Activated B cell treated with CpG ODN at 0.5 μM for 24 hours (primary cell): ENCODE measurements at regions of chr2 and their contacts with region 1.

Region 1: GRCh38 chr2:42944779-42945415 is 152.5 kb upstream of the HAAO start:
- DNase-seq: no peak
- ATAC-seq: no peak
- H3K4me3 Mint-ChIP-seq: no peak overlapping the region
- H3K27ac Mint-ChIP-seq: no peak overlapping the region
- H3K4me1 Mint-ChIP-seq: peaks cover 32% of the 10 kb centered on the region
- H3K27me3 Mint-ChIP-seq: no peaks in the 10 kb centered on the region
- CTCF ChIP-seq: no peak

Region 2: DNA sequence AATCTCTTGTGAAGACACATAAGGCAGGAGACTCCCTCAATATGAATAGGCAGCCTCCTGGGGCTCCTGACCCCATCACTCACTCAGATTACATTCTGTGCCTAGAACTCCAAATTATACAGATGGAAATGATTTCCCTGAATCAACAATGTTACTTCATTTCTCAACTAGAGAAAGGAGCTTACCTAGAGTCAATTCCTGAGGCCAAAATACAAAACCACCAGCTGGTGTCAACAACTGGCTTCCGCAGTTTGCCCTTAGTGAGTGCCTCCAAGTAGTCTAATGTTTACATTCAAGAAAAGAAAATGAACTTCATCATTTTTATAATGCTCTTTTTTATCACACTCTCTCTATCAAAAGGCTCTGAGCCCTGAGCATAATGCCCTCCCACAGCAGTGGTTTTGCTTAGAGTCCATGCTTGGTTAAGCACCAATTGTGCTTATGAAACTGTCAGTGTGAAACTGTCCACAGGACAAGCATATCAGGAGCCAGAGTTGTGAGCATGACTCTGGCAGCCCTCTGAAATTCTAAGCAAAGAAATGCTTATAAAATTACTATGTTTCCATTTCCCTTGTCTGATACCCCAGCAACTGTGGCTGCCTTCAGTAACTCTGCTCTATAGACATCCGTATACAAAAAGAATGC is 1202.8 kb before region 1 on chr2:
- CTCF ChIA-PET with region 1: no interaction called
- POLR2A ChIA-PET with region 1: no interaction called
- intact Hi-C with region 1: no loop called
- DNase-seq: no peak
- ATAC-seq: no peak
- H3K4me3 Mint-ChIP-seq: no peak overlapping the region
- H3K27ac Mint-ChIP-seq: no peak overlapping the region
- H3K4me1 Mint-ChIP-seq: no peaks in the 10 kb centered on the region
- H3K27me3 Mint-ChIP-seq: no peaks in the 10 kb centered on the region
- CTCF ChIP-seq: no peak

Region 3: DNA sequence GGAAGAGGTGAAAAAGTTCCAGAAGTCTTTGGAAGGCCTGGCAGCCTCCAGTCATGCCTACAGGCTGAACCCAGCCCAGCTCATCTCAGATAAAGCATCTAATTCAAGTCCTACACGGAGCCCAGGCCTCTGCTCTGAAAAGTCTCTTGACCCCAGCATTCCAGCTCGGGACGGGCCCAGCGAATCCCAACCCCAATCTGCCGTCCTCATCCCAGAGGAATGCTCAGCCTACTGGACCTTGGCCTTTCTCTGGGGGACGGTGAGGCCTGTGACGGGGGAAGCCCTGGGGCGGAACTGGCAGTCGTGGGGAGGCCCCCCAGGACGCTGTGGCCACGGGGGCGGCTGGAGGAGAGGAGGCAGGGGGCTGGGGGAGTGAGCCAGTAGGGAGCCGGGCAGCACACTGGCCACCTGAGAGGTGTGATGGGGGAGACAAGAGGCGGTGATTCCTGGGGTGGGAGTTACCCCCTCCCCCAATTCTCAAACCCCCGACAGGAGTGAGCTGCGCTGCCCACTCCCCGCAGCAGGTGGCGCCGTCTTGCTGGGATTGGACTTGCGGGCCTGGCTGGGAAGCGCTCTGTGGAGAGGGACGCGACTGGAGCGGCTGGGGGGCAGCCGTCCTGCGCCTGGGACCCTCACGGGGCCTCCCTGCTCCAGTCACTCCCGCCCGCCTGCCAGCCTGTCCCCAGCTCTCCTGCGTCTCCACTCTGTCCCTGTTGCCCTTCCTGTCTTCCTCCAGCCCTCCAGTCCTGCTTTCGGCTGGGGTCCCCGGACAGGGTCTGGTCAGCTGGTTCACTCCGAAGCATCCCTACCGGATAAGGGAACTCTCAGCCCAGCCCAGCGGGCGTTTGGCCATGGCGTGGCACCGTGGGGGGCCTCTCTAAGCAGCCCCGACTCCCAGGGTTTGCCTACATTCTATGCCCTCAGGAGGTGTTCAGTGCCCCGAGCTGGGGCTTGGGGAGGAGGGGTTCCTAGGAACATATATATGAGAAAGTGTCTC is 30.1 kb after region 1 on chr2:
- CTCF ChIA-PET with region 1: interaction called, 6 read pairs
- POLR2A ChIA-PET with region 1: no interaction called
- intact Hi-C with region 1: loop called (anchors 2 kb)
- DNase-seq: peak; percentile 54
- ATAC-seq: peak; percentile 76
- H3K4me3 Mint-ChIP-seq: no peak overlapping the region
- H3K27ac Mint-ChIP-seq: no peak overlapping the region
- H3K4me1 Mint-ChIP-seq: peaks cover 35% of the 10 kb centered on the region
- H3K27me3 Mint-ChIP-seq: peaks cover 3% of the 10 kb centered on the region
- CTCF ChIP-seq: no peak

Region 4: GRCh38 chr2:43343573-43344304 is 398.8 kb after region 1 on chr2:
- CTCF ChIA-PET with region 1: no interaction called
- POLR2A ChIA-PET with region 1: no interaction called
- intact Hi-C with region 1: no loop called
- DNase-seq: no peak
- ATAC-seq: no peak
- H3K4me3 Mint-ChIP-seq: no peak overlapping the region
- H3K27ac Mint-ChIP-seq: no peak overlapping the region
- H3K4me1 Mint-ChIP-seq: no peaks in the 10 kb centered on the region
- H3K27me3 Mint-ChIP-seq: no peaks in the 10 kb centered on the region
- CTCF ChIP-seq: no peak